ENCODE measurements at regions of chr1 and their contacts with region 1.

Region 1: GRCh38 chr1:8525558-8526275 is 207.8 kb downstream of the SLC45A1 start:
- DNase-seq: peak; percentile 79 to 93 (median 85)
- H3K4me3 ChIP-seq: peak overlapping the region; percentile 44 to 63
- H3K4me3 Mint-ChIP-seq: no peak overlapping the region
- H3K27ac ChIP-seq: peak overlapping the region; percentile 78
- H3K27ac Mint-ChIP-seq: no peak overlapping the region
- H3K4me1 ChIP-seq: peaks cover 38% of the 10 kb centered on the region
- H3K4me1 Mint-ChIP-seq: peaks cover 21 to 43% (median 32%) of the 10 kb centered on the region in 4 donors
- H3K27me3 ChIP-seq: no peaks in the 10 kb centered on the region
- H3K27me3 Mint-ChIP-seq: no peaks in the 10 kb centered on the region

Region 2: DNA sequence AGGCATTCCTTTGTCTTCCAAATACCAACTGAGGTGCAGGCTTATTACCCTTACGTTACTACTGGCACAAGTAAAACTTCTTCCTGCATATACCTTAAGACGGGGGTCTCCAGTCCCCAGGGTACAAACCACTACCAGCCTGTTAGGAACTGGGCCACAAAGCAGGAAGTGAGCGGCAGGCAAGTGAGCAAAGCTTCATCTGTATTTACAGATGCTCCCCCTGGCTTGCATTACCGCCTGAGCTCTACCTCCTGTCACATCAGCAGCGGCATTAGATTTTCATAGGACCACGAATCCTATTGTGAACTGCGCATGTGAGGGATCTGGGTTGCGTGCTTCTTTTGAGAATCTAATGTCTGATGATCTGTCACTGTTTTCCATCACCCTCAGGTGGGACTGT is 94.7 kb before region 1 on chr1:
- CTCF ChIA-PET with region 1: interaction called, 8 read pairs
- POLR2A ChIA-PET with region 1: interaction called, 14 read pairs
- intact Hi-C with region 1: no loop called
- DNase-seq: peak in 4 of 5 donors; percentile 35 to 69 (median 42)
- H3K4me3 ChIP-seq: no peak overlapping the region
- H3K4me3 Mint-ChIP-seq: peak overlapping the region in 7 of 8 donors; percentile 45 to 82 (median 73)
- H3K27ac ChIP-seq: peak overlapping the region; percentile 53
- H3K27ac Mint-ChIP-seq: peak overlapping the region; percentile 60 to 91 (median 85)
- H3K4me1 ChIP-seq: peaks cover 60% of the 10 kb centered on the region
- H3K4me1 Mint-ChIP-seq: peaks cover 48 to 72% (median 58%) of the 10 kb centered on the region in 4 donors
- H3K27me3 ChIP-seq: no peaks in the 10 kb centered on the region
- H3K27me3 Mint-ChIP-seq: no peaks in the 10 kb centered on the region

Region 3: GRCh38 chr1:8510041-8510823 is 15.5 kb before region 1 on chr1:
- CTCF ChIA-PET with region 1: interaction called, 5 read pairs
- POLR2A ChIA-PET with region 1: interaction called, 9 read pairs
- intact Hi-C with region 1: loop called (anchors 2 kb)
- DNase-seq: peak; percentile 26 to 70 (median 51)
- H3K4me3 ChIP-seq: no peak overlapping the region
- H3K4me3 Mint-ChIP-seq: peak overlapping the region; percentile 70 to 84 (median 73)
- H3K27ac ChIP-seq: peak overlapping the region; percentile 46
- H3K27ac Mint-ChIP-seq: peak overlapping the region; percentile 71 to 90 (median 88)
- H3K4me1 ChIP-seq: peaks cover 27% of the 10 kb centered on the region
- H3K4me1 Mint-ChIP-seq: peaks cover 25 to 58% (median 39%) of the 10 kb centered on the region in 4 donors
- H3K27me3 ChIP-seq: no peaks in the 10 kb centered on the region
- H3K27me3 Mint-ChIP-seq: no peaks in the 10 kb centered on the region

Region 4: GRCh38 chr1:8568837-8569236 is 43.1 kb after region 1 on chr1:
- CTCF ChIA-PET with region 1: no interaction called
- POLR2A ChIA-PET with region 1: no interaction called
- intact Hi-C with region 1: no loop called
- DNase-seq: no peak
- H3K4me3 ChIP-seq: no peak overlapping the region
- H3K4me3 Mint-ChIP-seq: no peak overlapping the region
- H3K27ac ChIP-seq: no peak overlapping the region
- H3K27ac Mint-ChIP-seq: no peak overlapping the region
- H3K4me1 ChIP-seq: no peaks in the 10 kb centered on the region
- H3K4me1 Mint-ChIP-seq: peaks cover 0 to 1% (median 0%) of the 10 kb centered on the region in 4 donors
- H3K27me3 ChIP-seq: no peaks in the 10 kb centered on the region
- H3K27me3 Mint-ChIP-seq: no peaks in the 10 kb centered on the region

Region 5: DNA sequence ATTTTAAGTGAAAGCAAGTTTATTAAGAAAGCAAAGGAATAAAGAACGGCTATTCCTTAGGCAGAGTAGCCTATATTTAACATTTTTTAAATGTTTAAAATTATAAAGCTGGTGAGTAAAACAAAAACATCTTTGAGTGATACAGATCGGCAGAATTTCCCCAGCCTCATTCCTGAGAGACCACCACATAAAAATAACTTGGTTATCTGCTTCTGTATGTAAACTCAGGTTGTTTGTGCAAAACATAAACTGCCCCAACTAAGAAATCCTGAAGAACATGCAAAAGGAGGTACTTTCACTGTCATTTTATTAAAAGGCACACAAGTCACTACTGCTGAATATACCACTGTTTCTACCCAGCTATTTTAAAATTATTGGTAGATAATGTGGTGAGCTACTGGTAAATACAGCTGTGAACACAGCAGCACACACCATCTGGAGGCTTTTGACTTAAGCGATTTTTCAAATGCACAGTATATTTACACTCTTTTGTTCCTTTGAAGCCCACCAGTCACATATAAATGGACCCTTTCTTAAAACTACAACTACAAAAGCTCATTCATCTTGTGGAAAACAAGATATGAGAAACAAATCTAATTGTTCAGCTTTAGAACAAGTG is 172.4 kb after region 1 on chr1:
- CTCF ChIA-PET with region 1: no interaction called
- POLR2A ChIA-PET with region 1: no interaction called
- intact Hi-C with region 1: no loop called
- DNase-seq: no peak
- H3K4me3 ChIP-seq: no peak overlapping the region
- H3K4me3 Mint-ChIP-seq: no peak overlapping the region
- H3K27ac ChIP-seq: no peak overlapping the region
- H3K27ac Mint-ChIP-seq: no peak overlapping the region
- H3K4me1 ChIP-seq: peaks cover 28% of the 10 kb centered on the region
- H3K4me1 Mint-ChIP-seq: peaks cover 10 to 22% (median 19%) of the 10 kb centered on the region in 4 donors
- H3K27me3 ChIP-seq: peaks cover 10% of the 10 kb centered on the region
- H3K27me3 Mint-ChIP-seq: peaks cover 12 to 16% of the 10 kb centered on the region in 2 donors

Region 6: GRCh38 chr1:8718850-8719361 is 193.2 kb after region 1 on chr1:
- CTCF ChIA-PET with region 1: no interaction called
- POLR2A ChIA-PET with region 1: no interaction called
- intact Hi-C with region 1: no loop called
- DNase-seq: no peak
- H3K4me3 ChIP-seq: no peak overlapping the region
- H3K4me3 Mint-ChIP-seq: no peak overlapping the region
- H3K27ac ChIP-seq: no peak overlapping the region
- H3K27ac Mint-ChIP-seq: no peak overlapping the region
- H3K4me1 ChIP-seq: peaks cover 12% of the 10 kb centered on the region
- H3K4me1 Mint-ChIP-seq: peaks cover 6 to 14% (median 10%) of the 10 kb centered on the region in 4 donors
- H3K27me3 ChIP-seq: no peaks in the 10 kb centered on the region
- H3K27me3 Mint-ChIP-seq: no peaks in the 10 kb centered on the region